ENCODE measurements at regions of chr11 and their contacts with region 1.

Region 1: GRCh38 chr11:7442588-7443215 is 42.6 kb upstream of the OLFML1 start:
- DNase-seq: peak; percentile 59 to 79
- ATAC-seq: peak; percentile 82 to 98 (median 94)
- H3K4me3 ChIP-seq: no peak overlapping the region
- H3K4me3 Mint-ChIP-seq: no peak overlapping the region
- H3K27ac ChIP-seq: no peak overlapping the region
- H3K27ac Mint-ChIP-seq: no peak overlapping the region
- H3K4me1 ChIP-seq: no peaks in the 10 kb centered on the region
- H3K4me1 Mint-ChIP-seq: peaks cover 2 to 3% of the 10 kb centered on the region in 2 donors
- H3K27me3 ChIP-seq: no peaks in the 10 kb centered on the region
- H3K27me3 Mint-ChIP-seq: peaks cover 0 to 4% of the 10 kb centered on the region in 2 donors
- CTCF ChIP-seq: peak; percentile 91

Region 2: GRCh38 chr11:6812390-6813005 is 630.2 kb before region 1 on chr11:
- intact Hi-C with region 1: loop called (anchors 10 kb)
- DNase-seq: peak in 1 of 2 donors; percentile 70
- ATAC-seq: peak; percentile 84 to 95 (median 89)
- H3K4me3 ChIP-seq: no peak overlapping the region
- H3K4me3 Mint-ChIP-seq: no peak overlapping the region
- H3K27ac ChIP-seq: no peak overlapping the region
- H3K27ac Mint-ChIP-seq: no peak overlapping the region
- H3K4me1 ChIP-seq: no peaks in the 10 kb centered on the region
- H3K4me1 Mint-ChIP-seq: peaks cover 0 to 5% of the 10 kb centered on the region in 2 donors
- H3K27me3 ChIP-seq: peaks cover 2% of the 10 kb centered on the region
- H3K27me3 Mint-ChIP-seq: peaks cover 19 to 42% of the 10 kb centered on the region in 2 donors
- CTCF ChIP-seq: peak; percentile 88

Region 3: DNA sequence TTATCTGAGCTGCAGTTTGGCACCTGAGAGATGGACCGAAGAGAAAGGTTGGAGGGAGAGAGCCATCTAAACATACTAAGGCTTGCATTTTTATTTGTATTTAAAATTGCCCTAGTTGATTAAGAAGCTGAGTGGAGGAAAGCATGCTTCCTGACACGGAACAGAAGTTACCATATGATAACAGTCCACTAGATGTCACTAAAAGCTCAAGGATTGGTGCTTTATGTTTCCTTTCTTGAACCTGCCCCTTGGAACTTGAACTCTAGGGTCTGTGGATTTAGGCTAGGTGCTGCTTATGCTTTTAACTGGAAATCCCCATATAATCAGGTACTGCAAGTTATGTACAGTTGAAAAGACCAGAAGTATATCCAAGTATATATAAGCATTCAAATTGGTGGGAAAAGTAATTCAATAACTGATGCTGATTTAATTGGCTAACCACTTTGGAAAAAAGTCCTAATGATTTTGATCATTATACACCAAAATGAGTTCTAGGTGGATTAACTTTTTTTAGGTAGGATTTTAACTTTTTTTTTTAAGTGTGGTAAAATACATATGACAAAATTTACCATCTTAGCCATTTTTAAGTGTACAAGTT is 344.4 kb before region 1 on chr11:
- intact Hi-C with region 1: loop called (anchors 1 kb)
- DNase-seq: peak in 1 of 2 donors; percentile 74
- ATAC-seq: peak in 2 of 3 donors; percentile 52 to 67
- H3K4me3 ChIP-seq: no peak overlapping the region
- H3K4me3 Mint-ChIP-seq: no peak overlapping the region
- H3K27ac ChIP-seq: no peak overlapping the region
- H3K27ac Mint-ChIP-seq: no peak overlapping the region
- H3K4me1 ChIP-seq: no peaks in the 10 kb centered on the region
- H3K4me1 Mint-ChIP-seq: no peaks in the 10 kb centered on the region
- H3K27me3 ChIP-seq: peaks cover 3% of the 10 kb centered on the region
- H3K27me3 Mint-ChIP-seq: peaks cover 10 to 20% of the 10 kb centered on the region in 2 donors
- CTCF ChIP-seq: peak; percentile 57

Region 4: DNA sequence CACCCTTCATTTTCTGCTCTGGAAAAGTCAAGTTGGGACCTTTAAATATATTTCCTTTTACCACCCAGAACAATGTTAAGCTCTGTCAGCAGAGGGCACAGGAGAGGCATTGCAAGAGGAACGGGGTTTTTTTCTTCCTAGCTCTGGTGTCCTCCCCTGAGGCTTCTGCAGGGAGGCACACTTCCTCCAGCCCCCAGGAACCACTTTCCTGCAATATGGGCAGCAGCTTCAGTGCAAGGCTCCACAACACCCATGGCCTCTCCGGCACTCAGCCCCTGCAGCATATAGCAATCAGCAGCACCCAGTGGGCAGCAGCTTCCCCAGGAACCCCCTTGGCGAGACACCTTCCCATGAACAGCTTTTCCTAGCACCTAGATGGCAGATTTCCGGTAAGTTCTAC is 89.6 kb before region 1 on chr11:
- intact Hi-C with region 1: loop called (anchors 2 kb)
- DNase-seq: peak in 1 of 2 donors; percentile 50
- ATAC-seq: no peak
- H3K4me3 ChIP-seq: no peak overlapping the region
- H3K4me3 Mint-ChIP-seq: no peak overlapping the region
- H3K27ac ChIP-seq: no peak overlapping the region
- H3K27ac Mint-ChIP-seq: no peak overlapping the region
- H3K4me1 ChIP-seq: no peaks in the 10 kb centered on the region
- H3K4me1 Mint-ChIP-seq: no peaks in the 10 kb centered on the region
- H3K27me3 ChIP-seq: peaks cover 2% of the 10 kb centered on the region
- H3K27me3 Mint-ChIP-seq: peaks cover 0 to 5% of the 10 kb centered on the region in 2 donors
- CTCF ChIP-seq: no peak

Region 5: DNA sequence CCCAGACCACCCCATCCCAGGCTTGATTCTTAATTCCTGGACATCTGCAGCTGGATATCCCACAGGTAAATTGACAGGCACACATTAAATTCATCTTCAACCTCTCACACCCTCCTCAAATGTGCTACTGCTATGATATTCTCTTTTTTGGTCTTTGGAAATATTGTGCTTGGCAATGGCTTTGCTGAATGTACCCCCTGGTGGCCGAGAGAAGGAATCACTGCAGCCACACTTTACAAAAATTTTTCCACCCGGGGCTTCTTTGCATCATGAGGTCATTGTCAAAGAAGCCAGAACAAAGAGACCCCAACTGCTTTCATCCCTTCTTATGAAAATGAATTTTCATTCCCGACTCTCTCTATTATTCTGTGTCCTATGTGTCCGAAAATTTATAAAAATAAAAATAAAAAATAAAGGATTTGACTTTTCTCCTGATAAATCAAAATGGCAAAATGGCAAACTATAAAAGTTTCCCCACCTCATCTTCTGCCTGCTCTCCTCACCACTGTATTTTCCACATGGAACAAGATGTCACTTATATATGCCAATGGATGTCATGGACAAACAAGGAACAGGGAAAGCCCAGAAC is 245.6 kb after region 1 on chr11:
- intact Hi-C with region 1: loop called (anchors 10 kb)
- DNase-seq: peak in 1 of 2 donors; percentile 59
- ATAC-seq: peak in 2 of 3 donors; percentile 44 to 54
- H3K4me3 ChIP-seq: no peak overlapping the region
- H3K4me3 Mint-ChIP-seq: no peak overlapping the region
- H3K27ac ChIP-seq: no peak overlapping the region
- H3K27ac Mint-ChIP-seq: no peak overlapping the region
- H3K4me1 ChIP-seq: no peaks in the 10 kb centered on the region
- H3K4me1 Mint-ChIP-seq: no peaks in the 10 kb centered on the region
- H3K27me3 ChIP-seq: peaks cover 3% of the 10 kb centered on the region
- H3K27me3 Mint-ChIP-seq: peaks cover 25 to 46% of the 10 kb centered on the region in 2 donors
- CTCF ChIP-seq: peak; percentile 74